WTC11 (cell line): ENCODE measurements at regions of chr1 and their contacts with region 1.

Region 1: DNA sequence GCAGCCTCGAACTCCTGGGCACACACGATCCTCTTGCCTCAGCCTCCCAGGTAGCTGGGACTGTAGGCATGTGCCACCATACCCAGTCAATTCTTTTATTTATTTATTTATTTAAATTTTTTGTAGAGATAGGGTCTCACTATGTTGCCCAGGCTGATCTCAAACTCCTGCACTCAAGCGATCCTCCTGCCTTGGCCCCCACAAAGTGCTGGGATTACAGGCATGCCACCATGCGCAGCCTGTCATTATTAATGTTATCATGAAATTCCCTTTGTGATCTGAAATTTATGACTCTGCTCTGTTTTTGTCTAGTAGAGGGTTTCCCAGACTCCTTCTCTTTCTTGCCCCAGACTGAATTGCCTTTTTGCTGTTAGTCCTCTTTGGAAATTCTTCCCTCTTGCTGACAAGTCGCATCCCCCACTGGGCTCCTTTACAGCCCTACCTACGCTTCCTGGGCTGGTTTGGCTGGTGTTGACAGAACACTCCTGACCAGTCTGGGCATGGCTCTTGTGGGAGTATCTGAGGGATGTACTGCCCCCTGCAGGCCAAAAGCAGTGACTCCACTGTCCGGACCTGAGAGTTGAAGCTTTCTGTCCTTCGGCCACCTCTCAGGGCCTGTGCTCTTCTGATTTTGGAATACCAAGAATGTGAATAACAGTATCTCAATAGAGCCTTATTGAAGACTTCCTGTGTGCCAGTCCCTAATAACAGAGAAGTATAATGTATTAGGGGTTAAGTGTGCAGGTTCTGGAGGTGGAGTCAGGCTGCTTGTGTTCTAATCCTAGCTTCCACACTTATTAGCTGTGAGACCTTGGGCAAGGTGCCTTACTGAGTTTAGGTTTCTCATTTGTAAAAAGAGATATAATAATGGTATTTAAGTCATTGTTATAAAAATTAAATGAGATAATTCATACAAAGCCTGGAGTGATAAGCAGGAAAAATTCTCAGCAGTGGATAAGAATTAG is 28.2 kb downstream of the TCEANC2 start:
- DNase-seq: peak; percentile 93
- ATAC-seq: peak; percentile 100
- H3K4me3 Mint-ChIP-seq: no peak overlapping the region
- H3K27ac Mint-ChIP-seq: 0 out of 2 replicates have a peak overlapping the region, but pooled peaks have one; percentile 4
- H3K4me1 Mint-ChIP-seq: peaks cover 8% of the 10 kb centered on the region
- H3K27me3 Mint-ChIP-seq: no peaks in the 10 kb centered on the region; the same call in 1 of the 2 replicates
- CTCF ChIP-seq: peak; percentile 82

Region 2: GRCh38 chr1:54052934-54053744 is 28.4 kb before region 1 on chr1 and contains the starts of genes TCEANC2 and TMEM59:
- CTCF ChIA-PET with region 1: interaction called, 16 read pairs
- POLR2A ChIA-PET with region 1: interaction called, 3 read pairs
- DNase-seq: peak; percentile 97
- ATAC-seq: peak; percentile 96
- H3K4me3 Mint-ChIP-seq: no peak within 1 kb of the TSS
- H3K27ac Mint-ChIP-seq: no peak within 1 kb of the TSS; the same call in 1 of the 2 replicates
- H3K4me1 Mint-ChIP-seq: peaks cover 8% of the 10 kb centered on the region; the same call in 1 of the 2 replicates
- H3K27me3 Mint-ChIP-seq: no peaks in the 10 kb centered on the region
- CTCF ChIP-seq: no peak
- total RNA-seq, gene TCEANC2: 4.7 to 6.9 TPM (median 6.3 TPM) in 3 replicates
- total RNA-seq, gene TMEM59: 122 to 133 TPM (median 128 TPM) in 3 replicates

Region 3: DNA sequence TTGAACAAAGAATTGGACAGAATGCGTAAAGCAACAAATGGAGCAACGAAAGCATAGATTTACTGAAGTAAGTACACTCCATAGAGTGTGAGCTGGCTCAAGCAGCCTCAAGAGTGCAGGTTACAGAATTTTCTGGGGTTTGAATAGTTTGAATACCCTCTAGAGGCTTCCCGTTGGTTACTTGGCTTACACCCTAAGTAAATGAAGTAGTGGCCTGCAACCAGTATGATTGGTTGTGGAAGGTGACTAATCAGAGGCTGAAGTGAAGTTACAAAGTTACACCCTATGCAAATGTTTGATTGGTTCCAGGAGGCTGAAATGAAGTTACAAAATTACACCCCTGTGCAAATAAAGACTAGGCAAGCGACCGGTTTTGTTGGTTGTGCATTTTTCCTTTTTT is 17.3 kb before region 1 on chr1:
- CTCF ChIA-PET with region 1: interaction called, 11 read pairs
- POLR2A ChIA-PET with region 1: no interaction called
- DNase-seq: no peak
- ATAC-seq: no peak
- H3K4me3 Mint-ChIP-seq: no peak overlapping the region
- H3K27ac Mint-ChIP-seq: no peak overlapping the region
- H3K4me1 Mint-ChIP-seq: no peaks in the 10 kb centered on the region
- H3K27me3 Mint-ChIP-seq: no peaks in the 10 kb centered on the region
- CTCF ChIP-seq: no peak

Region 4: GRCh38 chr1:54070171-54070837 is 11.3 kb before region 1 on chr1:
- CTCF ChIA-PET with region 1: interaction called, 23 read pairs
- POLR2A ChIA-PET with region 1: no interaction called
- DNase-seq: no peak
- ATAC-seq: peak; percentile 61
- H3K4me3 Mint-ChIP-seq: no peak overlapping the region
- H3K27ac Mint-ChIP-seq: no peak overlapping the region
- H3K4me1 Mint-ChIP-seq: no peaks in the 10 kb centered on the region
- H3K27me3 Mint-ChIP-seq: no peaks in the 10 kb centered on the region
- CTCF ChIP-seq: no peak

Region 5: GRCh38 chr1:54095546-54096226 is 14.1 kb after region 1 on chr1:
- CTCF ChIA-PET with region 1: interaction called, 15 read pairs
- POLR2A ChIA-PET with region 1: no interaction called
- DNase-seq: no peak
- ATAC-seq: no peak; the same call in 1 of the 2 replicates
- H3K4me3 Mint-ChIP-seq: no peak overlapping the region
- H3K27ac Mint-ChIP-seq: no peak overlapping the region
- H3K4me1 Mint-ChIP-seq: peaks cover 19% of the 10 kb centered on the region
- H3K27me3 Mint-ChIP-seq: no peaks in the 10 kb centered on the region
- CTCF ChIP-seq: no peak

Region 6: GRCh38 chr1:54212872-54213271 is 131.3 kb after region 1 on chr1:
- CTCF ChIA-PET with region 1: no interaction called
- POLR2A ChIA-PET with region 1: no interaction called
- DNase-seq: no peak
- ATAC-seq: no peak
- H3K4me3 Mint-ChIP-seq: no peak overlapping the region
- H3K27ac Mint-ChIP-seq: no peak overlapping the region
- H3K4me1 Mint-ChIP-seq: no peaks in the 10 kb centered on the region
- H3K27me3 Mint-ChIP-seq: no peaks in the 10 kb centered on the region
- CTCF ChIP-seq: no peak